ENCODE measurements at regions of chr1 and their contacts with region 1.

Region 1: GRCh38 chr1:205273551-205273982 is 45.8 kb downstream of the TMCC2 start:
- DNase-seq: peak; percentile 95
- ATAC-seq: peak; percentile 78
- H3K4me3 Mint-ChIP-seq: no peak overlapping the region
- H3K27ac Mint-ChIP-seq: peak overlapping the region; percentile 83
- H3K4me1 Mint-ChIP-seq: peaks cover 17% of the 10 kb centered on the region
- H3K27me3 Mint-ChIP-seq: no peaks in the 10 kb centered on the region
- CTCF ChIP-seq: peak; percentile 97

Region 2: DNA sequence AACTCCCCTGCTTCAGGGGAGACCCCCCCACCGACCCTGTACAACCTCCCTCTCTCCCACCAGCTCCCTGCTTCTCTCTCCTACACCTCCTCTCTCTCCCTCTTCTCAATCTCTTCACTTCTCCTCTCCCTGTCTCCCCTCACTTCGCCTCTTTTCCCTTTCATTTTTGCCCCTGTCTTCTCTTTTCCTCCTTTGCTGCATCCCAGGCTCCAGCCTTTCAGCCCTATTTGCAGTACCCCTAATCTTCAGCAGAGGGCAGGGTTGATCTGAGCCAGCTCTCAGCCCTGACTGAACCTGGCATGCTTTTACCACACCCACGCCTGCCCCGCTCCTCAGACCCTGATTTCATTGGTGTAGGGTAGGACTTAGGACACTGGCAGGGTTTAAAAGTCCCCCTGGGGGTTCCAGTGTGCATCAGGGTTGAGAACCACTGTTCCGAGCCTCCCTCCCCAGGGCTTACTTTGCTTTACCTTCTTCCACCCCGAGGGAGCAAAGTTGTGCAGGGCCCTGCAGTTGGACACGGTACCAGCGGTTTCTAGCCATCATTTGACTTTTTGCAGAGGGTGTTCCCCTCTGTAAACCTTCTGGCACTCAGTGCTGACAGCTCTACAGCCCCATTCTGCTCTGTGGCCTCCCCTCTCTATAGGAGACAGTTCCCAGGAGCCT is 297.9 kb before region 1 on chr1:
- CTCF ChIA-PET with region 1: no interaction called
- POLR2A ChIA-PET with region 1: no interaction called
- DNase-seq: peak; percentile 73
- ATAC-seq: peak; percentile 88
- H3K4me3 Mint-ChIP-seq: no peak overlapping the region
- H3K27ac Mint-ChIP-seq: no peak overlapping the region
- H3K4me1 Mint-ChIP-seq: no peaks in the 10 kb centered on the region
- H3K27me3 Mint-ChIP-seq: no peaks in the 10 kb centered on the region
- CTCF ChIP-seq: peak; percentile 84

Region 3: GRCh38 chr1:205162301-205162700 is 111.3 kb before region 1 on chr1:
- CTCF ChIA-PET with region 1: no interaction called
- POLR2A ChIA-PET with region 1: no interaction called
- DNase-seq: no peak
- ATAC-seq: no peak
- H3K4me3 Mint-ChIP-seq: no peak overlapping the region
- H3K27ac Mint-ChIP-seq: no peak overlapping the region
- H3K4me1 Mint-ChIP-seq: no peaks in the 10 kb centered on the region
- H3K27me3 Mint-ChIP-seq: no peaks in the 10 kb centered on the region
- CTCF ChIP-seq: no peak

Region 4: GRCh38 chr1:205255941-205256780 is 17.4 kb before region 1 on chr1:
- CTCF ChIA-PET with region 1: interaction called, 36 read pairs
- POLR2A ChIA-PET with region 1: interaction called, 3 read pairs
- DNase-seq: peak; percentile 93
- ATAC-seq: peak; percentile 90
- H3K4me3 Mint-ChIP-seq: no peak overlapping the region
- H3K27ac Mint-ChIP-seq: 0 out of 2 replicates have a peak overlapping the region, but pooled peaks have one; percentile 83
- H3K4me1 Mint-ChIP-seq: peaks cover 17% of the 10 kb centered on the region
- H3K27me3 Mint-ChIP-seq: no peaks in the 10 kb centered on the region
- CTCF ChIP-seq: peak; percentile 98

Region 5: DNA sequence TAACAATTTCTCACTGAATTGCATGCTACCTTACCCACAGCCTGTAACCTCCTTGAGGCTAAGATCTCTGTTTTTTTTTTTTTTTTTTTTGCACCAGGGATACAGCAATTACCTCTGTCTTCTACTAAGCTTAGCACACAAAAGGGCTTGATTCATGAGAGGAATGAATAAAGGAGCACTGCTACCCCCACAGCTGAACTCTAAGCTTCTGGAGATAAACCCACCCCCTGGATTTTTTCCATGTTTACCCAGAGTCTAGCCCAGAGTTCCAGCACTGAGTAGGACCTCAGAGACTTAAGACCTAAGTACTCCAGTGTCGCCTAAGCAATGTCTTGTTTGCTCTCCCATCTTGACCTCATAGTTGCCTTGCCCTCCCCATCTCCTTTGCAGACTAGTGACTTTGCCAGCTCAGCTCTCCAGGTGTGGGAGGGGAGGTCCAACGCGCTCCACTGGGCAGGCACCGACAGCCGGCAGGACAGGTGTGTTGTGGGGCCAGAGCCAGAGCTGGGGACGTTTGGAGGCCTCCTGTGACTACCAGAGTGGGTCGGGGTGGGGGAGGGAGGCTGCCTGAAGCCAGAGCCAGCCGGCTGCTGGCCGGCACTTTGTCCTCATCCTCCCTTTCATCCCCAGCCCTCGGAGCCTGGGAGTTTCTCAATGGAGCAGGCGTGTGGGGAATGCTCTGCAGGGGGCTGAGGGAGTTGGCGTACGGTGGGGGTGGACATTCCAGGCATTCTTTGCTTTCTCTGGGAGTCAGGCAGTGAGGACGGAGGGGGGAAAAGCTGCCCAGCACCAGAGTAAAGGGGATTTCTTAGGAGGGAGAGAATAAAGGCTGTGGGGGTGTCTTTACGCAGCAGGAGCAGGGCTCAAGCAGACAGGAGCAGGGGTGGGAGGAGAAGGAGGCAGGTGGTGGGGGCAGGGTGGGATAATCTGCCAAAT is 27.6 kb after region 1 on chr1:
- CTCF ChIA-PET with region 1: interaction called, 114 read pairs
- POLR2A ChIA-PET with region 1: interaction called, 46 read pairs
- DNase-seq: peak; percentile 98
- ATAC-seq: peak; percentile 83
- H3K4me3 Mint-ChIP-seq: peak overlapping the region; percentile 54
- H3K27ac Mint-ChIP-seq: peak overlapping the region; percentile 100
- H3K4me1 Mint-ChIP-seq: peaks cover 63% of the 10 kb centered on the region
- H3K27me3 Mint-ChIP-seq: no peaks in the 10 kb centered on the region
- CTCF ChIP-seq: no peak

Region 6: GRCh38 chr1:205335643-205336091 is 62.1 kb after region 1 on chr1:
- CTCF ChIA-PET with region 1: interaction called, 684 read pairs
- POLR2A ChIA-PET with region 1: interaction called, 3 read pairs
- DNase-seq: peak; percentile 87
- ATAC-seq: peak; percentile 87
- H3K4me3 Mint-ChIP-seq: no peak overlapping the region
- H3K27ac Mint-ChIP-seq: no peak overlapping the region
- H3K4me1 Mint-ChIP-seq: peaks cover 21% of the 10 kb centered on the region
- H3K27me3 Mint-ChIP-seq: peaks cover 9% of the 10 kb centered on the region
- CTCF ChIP-seq: peak; percentile 60; the same call in 1 of the 2 replicates

Region 7: DNA sequence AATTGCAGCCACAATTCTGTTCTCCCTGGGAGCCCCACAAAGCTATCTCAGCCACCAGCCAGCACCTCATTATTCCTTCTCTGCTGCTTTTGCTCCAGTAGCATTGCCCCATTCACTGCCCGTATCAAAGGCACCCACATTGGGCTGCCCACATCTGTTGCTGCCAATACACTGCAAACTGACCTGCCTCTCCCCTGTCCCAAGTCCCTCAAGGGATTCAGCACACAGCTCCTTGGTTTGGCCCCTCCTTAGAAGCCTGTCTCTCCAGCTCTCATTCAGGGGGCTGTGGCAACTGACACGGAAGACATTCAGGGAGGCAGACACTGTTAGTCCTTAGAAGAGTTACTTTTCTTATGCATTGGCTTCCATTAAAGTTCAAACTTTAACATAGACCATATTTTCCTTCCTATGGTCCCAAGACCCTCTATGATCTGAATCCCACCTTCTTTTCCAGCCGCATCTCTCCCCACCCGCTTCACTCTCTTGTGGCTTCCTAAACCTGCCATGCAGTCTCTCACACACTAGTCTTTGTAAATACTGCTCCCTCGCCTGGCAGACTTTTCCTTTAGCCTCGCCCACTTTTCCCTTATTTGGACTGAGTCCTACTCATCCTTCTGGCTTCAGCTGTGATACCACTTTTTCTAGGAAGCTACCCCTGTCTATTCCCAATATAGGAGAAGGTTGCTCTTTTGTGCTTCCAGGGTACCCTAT is 102.4 kb after region 1 on chr1:
- CTCF ChIA-PET with region 1: interaction called, 16 read pairs
- POLR2A ChIA-PET with region 1: no interaction called
- DNase-seq: peak; percentile 30
- ATAC-seq: peak; percentile 90
- H3K4me3 Mint-ChIP-seq: peak overlapping the region; percentile 52
- H3K27ac Mint-ChIP-seq: peak overlapping the region; percentile 80
- H3K4me1 Mint-ChIP-seq: peaks cover 46% of the 10 kb centered on the region
- H3K27me3 Mint-ChIP-seq: no peaks in the 10 kb centered on the region
- CTCF ChIP-seq: no peak

Measured in WTC11 (cell line).